Caco-2 (cell line): ENCODE measurements at regions of chr1 and their contacts with region 1.

Region 1: GRCh38 chr1:8702850-8703810 is 114.3 kb downstream of the RERE start:
- DNase-seq: peak; percentile 89 to 93
- H3K4me3 ChIP-seq: peak overlapping the region; percentile 87
- H3K4me3 Mint-ChIP-seq: peak overlapping the region; percentile 86
- H3K27ac Mint-ChIP-seq: peak overlapping the region; percentile 89
- H3K4me1 ChIP-seq: peaks cover 63% of the 10 kb centered on the region
- H3K4me1 Mint-ChIP-seq: peaks cover 32% of the 10 kb centered on the region
- H3K27me3 ChIP-seq: no peaks in the 10 kb centered on the region
- H3K27me3 Mint-ChIP-seq: no peaks in the 10 kb centered on the region
- CTCF ChIP-seq: peak in 1 of 2 experiments; percentile 9

Region 2: GRCh38 chr1:8423650-8424538 is 279.2 kb before region 1 on chr1:
- CTCF ChIA-PET with region 1: no interaction called
- POLR2A ChIA-PET with region 1: no interaction called
- intact Hi-C with region 1: loop called (anchors 5 kb)
- DNase-seq: peak; percentile 75 to 79
- H3K4me3 ChIP-seq: peak overlapping the region; percentile 80
- H3K4me3 Mint-ChIP-seq: no peak overlapping the region
- H3K27ac Mint-ChIP-seq: peak overlapping the region; percentile 74
- H3K4me1 ChIP-seq: peaks cover 50% of the 10 kb centered on the region
- H3K4me1 Mint-ChIP-seq: peaks cover 30% of the 10 kb centered on the region
- H3K27me3 ChIP-seq: no peaks in the 10 kb centered on the region
- H3K27me3 Mint-ChIP-seq: no peaks in the 10 kb centered on the region
- CTCF ChIP-seq: peak in 1 of 2 experiments; percentile 4

Region 3: GRCh38 chr1:8560611-8561544 is 142.3 kb before region 1 on chr1:
- CTCF ChIA-PET with region 1: interaction called, 3 read pairs
- POLR2A ChIA-PET with region 1: no interaction called
- intact Hi-C with region 1: loop called (anchors 5 kb)
- DNase-seq: peak in 1 of 2 experiments; percentile 42
- H3K4me3 ChIP-seq: no peak overlapping the region
- H3K4me3 Mint-ChIP-seq: no peak overlapping the region
- H3K27ac Mint-ChIP-seq: no peak overlapping the region
- H3K4me1 ChIP-seq: peaks cover 50% of the 10 kb centered on the region
- H3K4me1 Mint-ChIP-seq: peaks cover 27% of the 10 kb centered on the region
- H3K27me3 ChIP-seq: no peaks in the 10 kb centered on the region
- H3K27me3 Mint-ChIP-seq: no peaks in the 10 kb centered on the region
- CTCF ChIP-seq: peak; percentile 72 to 73

Region 4: GRCh38 chr1:8629241-8630091 is 73.7 kb before region 1 on chr1:
- CTCF ChIA-PET with region 1: no interaction called
- POLR2A ChIA-PET with region 1: no interaction called
- intact Hi-C with region 1: loop called (anchors 5 kb)
- DNase-seq: no peak
- H3K4me3 ChIP-seq: no peak overlapping the region
- H3K4me3 Mint-ChIP-seq: no peak overlapping the region
- H3K27ac Mint-ChIP-seq: peak overlapping the region; percentile 9
- H3K4me1 ChIP-seq: peaks cover 56% of the 10 kb centered on the region
- H3K4me1 Mint-ChIP-seq: peaks cover 47% of the 10 kb centered on the region
- H3K27me3 ChIP-seq: no peaks in the 10 kb centered on the region
- H3K27me3 Mint-ChIP-seq: no peaks in the 10 kb centered on the region
- CTCF ChIP-seq: no peak

Region 5: GRCh38 chr1:8671306-8671917 is 31.7 kb before region 1 on chr1:
- CTCF ChIA-PET with region 1: no interaction called
- POLR2A ChIA-PET with region 1: no interaction called
- intact Hi-C with region 1: loop called (anchors 5 kb)
- DNase-seq: peak in 1 of 2 experiments; percentile 44
- H3K4me3 ChIP-seq: no peak overlapping the region
- H3K4me3 Mint-ChIP-seq: no peak overlapping the region
- H3K27ac Mint-ChIP-seq: peak overlapping the region; percentile 33
- H3K4me1 ChIP-seq: peaks cover 38% of the 10 kb centered on the region
- H3K4me1 Mint-ChIP-seq: peaks cover 23% of the 10 kb centered on the region
- H3K27me3 ChIP-seq: no peaks in the 10 kb centered on the region
- H3K27me3 Mint-ChIP-seq: no peaks in the 10 kb centered on the region
- CTCF ChIP-seq: peak; percentile 61 to 80

Region 6: DNA sequence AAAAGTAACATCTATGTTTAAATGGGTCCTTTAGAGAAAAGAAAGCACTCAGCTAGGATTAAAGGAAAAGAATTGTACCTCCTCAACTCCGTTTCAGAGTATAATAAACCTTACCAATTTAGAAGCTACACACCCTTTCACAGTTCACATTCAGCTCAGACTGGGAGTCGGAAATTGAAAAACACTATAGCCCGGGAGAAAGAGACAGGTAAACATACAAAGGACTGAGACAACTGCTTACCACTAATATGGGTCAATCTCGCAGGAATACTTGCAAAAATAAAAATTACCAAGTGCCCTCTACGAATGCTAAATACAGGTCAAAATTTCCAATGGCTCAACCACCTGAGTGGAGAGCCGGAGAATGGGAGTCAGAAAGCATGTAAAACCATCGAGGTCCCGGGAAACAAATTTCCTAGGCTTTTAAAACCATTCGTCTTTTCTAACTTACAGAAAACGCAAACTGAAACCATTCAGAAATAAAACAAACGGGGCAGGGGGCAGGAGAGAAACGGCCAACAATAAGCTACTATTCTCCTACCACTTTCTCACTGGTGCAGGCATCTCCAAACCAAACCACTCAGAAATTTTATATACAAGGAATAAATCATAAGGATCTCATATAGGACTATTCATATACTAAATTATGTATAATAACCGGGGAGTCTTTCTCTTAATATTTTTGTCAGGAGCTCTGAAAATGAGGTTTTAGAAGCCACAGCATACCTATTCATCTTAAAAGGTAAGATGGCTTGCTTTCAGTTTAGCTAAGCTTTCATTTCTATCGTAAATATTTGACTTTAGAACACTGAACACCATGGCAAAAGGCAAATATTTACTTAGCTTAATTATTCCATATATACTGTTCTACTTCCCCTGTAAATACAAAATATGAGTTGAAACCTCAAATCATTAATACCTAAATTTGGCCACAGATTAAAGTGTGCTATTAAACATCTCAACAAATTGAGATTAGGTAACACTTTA is 22.2 kb before region 1 on chr1:
- CTCF ChIA-PET with region 1: no interaction called
- POLR2A ChIA-PET with region 1: no interaction called
- intact Hi-C with region 1: loop called (anchors 2 kb)
- DNase-seq: no peak
- H3K4me3 ChIP-seq: peak overlapping the region; percentile 10; the same call in 1 of the 2 replicates
- H3K4me3 Mint-ChIP-seq: no peak overlapping the region
- H3K27ac Mint-ChIP-seq: no peak overlapping the region
- H3K4me1 ChIP-seq: peaks cover 37% of the 10 kb centered on the region
- H3K4me1 Mint-ChIP-seq: no peaks in the 10 kb centered on the region
- H3K27me3 ChIP-seq: no peaks in the 10 kb centered on the region
- H3K27me3 Mint-ChIP-seq: no peaks in the 10 kb centered on the region
- CTCF ChIP-seq: no peak

Region 7: GRCh38 chr1:8693107-8693506 is 10.0 kb before region 1 on chr1:
- CTCF ChIA-PET with region 1: no interaction called
- POLR2A ChIA-PET with region 1: no interaction called
- intact Hi-C with region 1: no loop called
- DNase-seq: no peak
- H3K4me3 ChIP-seq: no peak overlapping the region
- H3K4me3 Mint-ChIP-seq: no peak overlapping the region
- H3K27ac Mint-ChIP-seq: no peak overlapping the region
- H3K4me1 ChIP-seq: no peaks in the 10 kb centered on the region
- H3K4me1 Mint-ChIP-seq: no peaks in the 10 kb centered on the region
- H3K27me3 ChIP-seq: no peaks in the 10 kb centered on the region
- H3K27me3 Mint-ChIP-seq: no peaks in the 10 kb centered on the region
- CTCF ChIP-seq: no peak

Region 8: GRCh38 chr1:8763888-8764287 is 60.8 kb after region 1 on chr1:
- CTCF ChIA-PET with region 1: no interaction called
- POLR2A ChIA-PET with region 1: no interaction called
- intact Hi-C with region 1: no loop called
- DNase-seq: no peak
- H3K4me3 ChIP-seq: no peak overlapping the region
- H3K4me3 Mint-ChIP-seq: no peak overlapping the region
- H3K27ac Mint-ChIP-seq: no peak overlapping the region
- H3K4me1 ChIP-seq: no peaks in the 10 kb centered on the region
- H3K4me1 Mint-ChIP-seq: peaks cover 12% of the 10 kb centered on the region
- H3K27me3 ChIP-seq: no peaks in the 10 kb centered on the region
- H3K27me3 Mint-ChIP-seq: no peaks in the 10 kb centered on the region
- CTCF ChIP-seq: no peak

Region 9: DNA sequence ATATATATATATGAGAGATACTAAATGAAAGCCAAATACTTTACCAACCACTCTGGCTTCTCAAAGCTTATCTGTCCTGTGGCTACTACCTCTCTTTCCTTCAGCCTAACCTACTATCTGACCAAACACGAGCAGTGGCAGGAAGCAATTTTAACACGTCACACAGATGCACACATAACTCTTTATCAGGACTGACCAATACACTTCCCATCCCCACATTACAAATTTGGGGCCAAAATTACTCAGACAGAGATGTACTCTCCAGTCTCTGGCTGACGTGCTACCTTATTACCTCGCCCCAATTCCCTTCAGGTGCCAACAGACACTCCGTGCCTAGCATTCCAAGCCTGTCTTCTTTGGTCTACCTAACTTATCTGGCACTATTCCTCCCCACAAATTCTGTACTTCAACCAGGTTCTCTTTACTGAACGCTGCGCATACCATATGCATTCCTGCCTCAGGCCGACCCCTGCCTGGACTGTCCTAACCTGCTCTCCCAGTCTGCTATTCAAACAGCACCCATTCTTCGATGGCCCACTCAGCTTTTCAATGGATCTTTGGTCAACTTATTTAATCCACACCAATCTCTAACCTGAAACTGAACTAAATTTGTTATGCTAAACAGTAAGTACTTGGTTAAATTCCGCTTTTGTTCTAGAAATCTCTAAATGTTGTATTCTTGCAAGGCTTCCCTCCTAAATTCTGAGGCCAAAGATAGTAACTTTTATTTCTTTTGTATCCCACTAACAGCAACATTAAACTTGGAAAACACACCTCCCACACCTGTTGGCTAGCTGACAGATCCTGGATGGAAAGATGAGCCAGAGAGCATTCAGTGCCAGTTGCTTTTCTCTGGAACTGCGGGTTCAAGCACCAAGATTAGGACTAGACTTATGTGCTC is 86.4 kb after region 1 on chr1:
- CTCF ChIA-PET with region 1: no interaction called
- POLR2A ChIA-PET with region 1: no interaction called
- intact Hi-C with region 1: no loop called
- DNase-seq: peak; percentile 87 to 91
- H3K4me3 ChIP-seq: peak overlapping the region; percentile 4; the same call in 1 of the 2 replicates
- H3K4me3 Mint-ChIP-seq: peak overlapping the region; percentile 72
- H3K27ac Mint-ChIP-seq: peak overlapping the region; percentile 93
- H3K4me1 ChIP-seq: peaks cover 30% of the 10 kb centered on the region
- H3K4me1 Mint-ChIP-seq: peaks cover 31% of the 10 kb centered on the region
- H3K27me3 ChIP-seq: no peaks in the 10 kb centered on the region
- H3K27me3 Mint-ChIP-seq: no peaks in the 10 kb centered on the region
- CTCF ChIP-seq: no peak